ENCODE measurements at regions of chr17 and their contacts with region 1.

Region 1: GRCh38 chr17:59004338-59005111 is 102.2 kb downstream of the TRIM37 start:
- DNase-seq: peak; percentile 76

Region 2: DNA sequence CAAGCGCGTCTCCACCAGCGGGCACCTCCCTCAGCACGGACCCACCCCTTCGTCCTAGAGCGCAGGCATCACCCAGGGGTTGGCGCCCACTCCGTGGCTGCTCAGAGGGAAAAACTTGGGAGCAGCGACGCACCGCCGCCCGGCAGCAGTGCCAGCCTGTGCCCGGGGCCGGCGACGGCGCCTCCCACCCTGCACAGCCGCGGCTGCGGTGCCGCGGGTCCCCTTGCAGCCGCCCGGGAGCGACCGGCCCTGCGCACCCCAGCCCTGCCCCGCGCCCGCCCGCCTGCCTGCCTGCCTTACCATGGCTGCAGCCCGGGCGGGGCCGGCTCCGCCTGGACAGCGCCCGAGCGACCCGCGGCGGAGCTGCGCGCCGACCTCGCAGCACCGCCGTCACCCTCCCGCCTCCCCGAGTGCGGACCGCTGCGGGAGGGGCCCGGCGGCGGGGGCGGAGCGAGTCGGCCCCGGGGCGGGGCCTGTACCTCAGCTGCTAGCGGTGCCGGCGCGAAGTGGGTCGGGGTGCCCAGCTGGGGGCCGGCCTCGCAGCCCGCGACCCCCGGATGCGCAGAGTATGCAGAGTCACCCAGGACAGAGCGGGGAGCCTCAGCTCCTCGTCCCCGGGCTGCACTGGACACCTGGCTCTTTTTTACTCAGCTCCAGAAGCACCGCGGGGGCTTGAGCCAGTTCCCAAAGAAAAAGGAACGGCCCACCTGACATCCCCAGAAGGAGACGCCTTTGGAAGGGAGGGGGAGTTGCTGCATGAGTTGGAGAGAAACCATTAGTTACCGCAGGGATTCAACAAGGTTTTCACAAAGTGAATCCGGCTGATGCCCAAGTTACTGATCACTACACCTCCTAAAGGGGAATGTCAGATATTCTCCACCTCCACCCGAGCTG is 472.6 kb before region 1 on chr17:
- in situ Hi-C with region 1: loop called (anchors 25 kb)
- DNase-seq: peak; percentile 30

Region 3: DNA sequence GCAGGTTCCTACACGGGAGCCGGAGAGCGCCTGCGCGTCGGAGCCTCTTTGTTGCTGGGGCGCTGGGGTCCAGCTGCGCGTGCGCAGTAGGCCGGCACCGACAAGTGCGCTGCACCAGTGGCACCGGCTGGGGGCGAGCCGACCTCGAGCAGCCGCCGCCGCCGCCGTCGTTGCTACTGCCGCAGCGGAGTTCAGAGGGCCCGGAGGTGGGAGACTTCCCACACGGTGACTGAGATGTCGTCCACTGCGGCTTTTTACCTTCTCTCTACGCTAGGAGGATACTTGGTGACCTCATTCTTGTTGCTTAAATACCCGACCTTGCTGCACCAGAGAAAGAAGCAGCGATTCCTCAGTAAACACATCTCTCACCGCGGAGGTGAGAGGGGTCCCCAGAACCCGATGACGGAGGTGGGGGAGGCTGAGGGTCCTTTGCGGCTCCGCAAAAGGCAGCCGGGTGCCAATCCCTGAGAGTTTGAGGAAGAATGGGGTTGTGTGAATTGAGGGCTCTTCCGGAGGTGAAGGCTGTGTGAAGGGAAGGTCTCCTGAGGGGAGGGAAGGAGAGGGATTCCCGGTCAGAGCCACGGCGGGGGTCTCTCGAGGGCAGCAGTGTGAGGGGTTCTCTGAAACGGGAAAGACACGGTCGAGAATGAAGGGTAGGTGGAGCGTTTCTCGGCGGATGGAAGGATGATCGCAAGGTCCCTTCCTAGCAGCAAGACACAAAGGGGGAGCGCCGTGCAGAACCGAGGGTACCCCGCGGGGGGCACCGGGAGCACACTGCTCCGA is 216.0 kb after region 1 on chr17 and contains the start of gene GDPD1:
- in situ Hi-C with region 1: no loop called
- DNase-seq: peak; percentile 97

Measured in KBM-7 (cell line).